ENCODE measurements at regions of chr2 and their contacts with region 1.

Region 1: GRCh38 chr2:177263451-177264208 is 897 bp downstream of the NFE2L2 start:
- DNase-seq: peak; percentile 96
- ATAC-seq: peak; percentile 69
- H3K4me3 Mint-ChIP-seq: peak overlapping the region; percentile 91
- H3K27ac Mint-ChIP-seq: peak overlapping the region; percentile 98
- H3K4me1 Mint-ChIP-seq: peaks cover 53% of the 10 kb centered on the region
- H3K27me3 Mint-ChIP-seq: no peaks in the 10 kb centered on the region

Region 2: GRCh38 chr2:177195194-177195593 is 68.4 kb before region 1 on chr2:
- CTCF ChIA-PET with region 1: no interaction called
- POLR2A ChIA-PET with region 1: no interaction called
- intact Hi-C with region 1: no loop called
- DNase-seq: no peak
- ATAC-seq: peak; percentile 51
- H3K4me3 Mint-ChIP-seq: no peak overlapping the region
- H3K27ac Mint-ChIP-seq: no peak overlapping the region
- H3K4me1 Mint-ChIP-seq: peaks cover 2% of the 10 kb centered on the region
- H3K27me3 Mint-ChIP-seq: no peaks in the 10 kb centered on the region

Region 3: GRCh38 chr2:177212106-177212890 is 51.3 kb before region 1 on chr2 and contains the start of gene HNRNPA3:
- CTCF ChIA-PET with region 1: interaction called, 15 read pairs
- POLR2A ChIA-PET with region 1: interaction called, 53 read pairs
- intact Hi-C with region 1: loop called (anchors 1 kb)
- DNase-seq: peak; percentile 100
- ATAC-seq: peak; percentile 90
- H3K4me3 Mint-ChIP-seq: peak within 1 kb of the TSS; percentile 86
- H3K27ac Mint-ChIP-seq: peak within 1 kb of the TSS; percentile 99
- H3K4me1 Mint-ChIP-seq: peaks cover 42% of the 10 kb centered on the region
- H3K27me3 Mint-ChIP-seq: no peaks in the 10 kb centered on the region
- total RNA-seq, gene HNRNPA3: 200 to 290 TPM

Region 4: DNA sequence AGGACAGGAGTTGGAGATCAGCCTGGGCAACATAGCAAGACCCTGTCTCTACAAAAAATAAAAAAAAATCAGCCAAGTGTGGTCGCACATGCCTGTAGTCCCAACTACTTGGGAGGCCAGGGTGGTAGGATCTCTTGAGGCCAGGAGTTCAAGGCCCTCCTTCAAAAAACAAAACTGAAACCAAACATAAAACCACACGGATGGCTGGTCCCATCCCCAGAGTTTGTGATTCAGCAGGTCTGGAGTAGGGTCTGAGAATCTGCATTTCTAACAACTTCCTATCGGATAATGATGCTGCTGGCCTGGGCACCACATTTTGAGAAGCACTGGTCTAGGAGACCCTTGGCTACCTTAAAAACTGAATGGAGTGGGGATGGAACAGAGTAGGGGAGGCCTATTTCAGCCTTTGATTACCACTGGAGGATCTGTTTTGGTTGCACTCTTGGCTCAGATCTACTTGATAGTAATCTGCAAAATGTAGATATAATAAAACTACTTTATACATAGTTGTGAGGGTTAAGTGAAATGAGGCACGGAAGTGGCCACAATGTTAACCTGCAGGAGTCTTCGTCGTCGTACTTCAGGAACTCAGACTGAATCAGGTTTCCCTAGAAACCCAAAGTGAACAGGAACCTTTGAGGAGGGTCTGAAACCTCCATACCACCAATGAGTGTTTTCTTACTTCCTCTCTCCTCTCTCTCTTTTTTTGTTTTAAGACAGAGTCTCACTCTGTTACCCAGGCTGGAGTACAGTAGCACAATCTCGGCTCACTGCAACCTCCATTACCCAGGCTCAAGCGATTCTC is 26.4 kb after region 1 on chr2:
- CTCF ChIA-PET with region 1: interaction called, 23 read pairs
- POLR2A ChIA-PET with region 1: interaction called, 5 read pairs
- intact Hi-C with region 1: loop called (anchors 1 to 2 kb)
- DNase-seq: peak; percentile 30
- ATAC-seq: peak; percentile 73
- H3K4me3 Mint-ChIP-seq: peak overlapping the region; percentile 31
- H3K27ac Mint-ChIP-seq: peak overlapping the region; percentile 89
- H3K4me1 Mint-ChIP-seq: peaks cover 37% of the 10 kb centered on the region
- H3K27me3 Mint-ChIP-seq: no peaks in the 10 kb centered on the region

Region 5: DNA sequence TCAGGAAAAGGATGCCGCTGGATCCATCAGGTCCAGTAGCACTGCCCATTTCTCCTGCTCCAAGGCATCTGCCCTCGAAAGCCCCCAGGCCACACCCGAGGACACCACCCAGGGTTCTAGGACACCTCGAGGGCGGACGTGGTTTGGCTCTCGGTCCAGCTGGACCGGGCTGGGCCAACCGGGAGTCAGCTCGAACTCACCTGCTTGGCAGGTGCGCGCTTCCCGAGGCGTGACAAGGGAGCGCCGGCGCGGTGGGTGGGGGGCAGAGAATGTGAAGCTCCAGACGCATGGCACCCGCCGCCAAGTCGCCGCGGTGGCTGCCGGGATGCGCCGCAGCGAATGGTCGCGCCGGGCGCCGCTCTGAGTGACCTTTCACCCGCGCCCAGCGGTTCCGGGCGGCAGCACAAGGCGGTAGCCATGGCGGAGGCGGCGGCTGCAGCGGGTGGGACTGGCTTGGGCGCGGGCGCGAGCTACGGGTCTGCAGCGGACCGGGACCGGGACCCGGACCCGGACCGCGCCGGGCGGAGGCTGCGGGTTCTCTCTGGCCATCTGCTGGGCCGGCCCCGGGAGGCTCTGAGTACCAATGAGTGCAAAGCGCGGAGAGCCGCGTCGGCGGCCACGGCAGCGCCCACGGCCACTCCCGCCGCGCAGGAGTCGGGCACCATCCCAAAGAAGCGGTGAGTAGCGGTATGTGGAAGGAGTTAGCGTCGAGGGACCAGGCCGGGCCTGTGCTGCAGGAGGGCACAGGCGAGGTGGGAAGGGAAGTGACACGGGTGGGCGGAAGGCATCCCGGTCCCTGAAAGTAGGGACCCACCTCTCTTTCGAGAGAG is 129.0 kb after region 1 on chr2 and contains the start of gene AGPS:
- CTCF ChIA-PET with region 1: no interaction called
- POLR2A ChIA-PET with region 1: interaction called, 11 read pairs
- intact Hi-C with region 1: loop called (anchors 2 to 10 kb)
- DNase-seq: peak; percentile 91
- ATAC-seq: peak; percentile 97
- H3K4me3 Mint-ChIP-seq: peak within 1 kb of the TSS; percentile 89
- H3K27ac Mint-ChIP-seq: peak within 1 kb of the TSS; percentile 92
- H3K4me1 Mint-ChIP-seq: peaks cover 57% of the 10 kb centered on the region
- H3K27me3 Mint-ChIP-seq: no peaks in the 10 kb centered on the region
- total RNA-seq, gene AGPS: 58.7 to 67.3 TPM

Region 6: GRCh38 chr2:177552422-177553175 is 289.0 kb after region 1 on chr2:
- CTCF ChIA-PET with region 1: no interaction called
- POLR2A ChIA-PET with region 1: no interaction called
- intact Hi-C with region 1: loop called in 1 of 2 experiments (anchors 1 kb)
- DNase-seq: peak; percentile 92
- ATAC-seq: peak; percentile 96
- H3K4me3 Mint-ChIP-seq: peak overlapping the region; percentile 90
- H3K27ac Mint-ChIP-seq: peak overlapping the region; percentile 99
- H3K4me1 Mint-ChIP-seq: peaks cover 6% of the 10 kb centered on the region
- H3K27me3 Mint-ChIP-seq: no peaks in the 10 kb centered on the region